ENCODE measurements at regions of chr10 and their contacts with region 1.

Region 1: DNA sequence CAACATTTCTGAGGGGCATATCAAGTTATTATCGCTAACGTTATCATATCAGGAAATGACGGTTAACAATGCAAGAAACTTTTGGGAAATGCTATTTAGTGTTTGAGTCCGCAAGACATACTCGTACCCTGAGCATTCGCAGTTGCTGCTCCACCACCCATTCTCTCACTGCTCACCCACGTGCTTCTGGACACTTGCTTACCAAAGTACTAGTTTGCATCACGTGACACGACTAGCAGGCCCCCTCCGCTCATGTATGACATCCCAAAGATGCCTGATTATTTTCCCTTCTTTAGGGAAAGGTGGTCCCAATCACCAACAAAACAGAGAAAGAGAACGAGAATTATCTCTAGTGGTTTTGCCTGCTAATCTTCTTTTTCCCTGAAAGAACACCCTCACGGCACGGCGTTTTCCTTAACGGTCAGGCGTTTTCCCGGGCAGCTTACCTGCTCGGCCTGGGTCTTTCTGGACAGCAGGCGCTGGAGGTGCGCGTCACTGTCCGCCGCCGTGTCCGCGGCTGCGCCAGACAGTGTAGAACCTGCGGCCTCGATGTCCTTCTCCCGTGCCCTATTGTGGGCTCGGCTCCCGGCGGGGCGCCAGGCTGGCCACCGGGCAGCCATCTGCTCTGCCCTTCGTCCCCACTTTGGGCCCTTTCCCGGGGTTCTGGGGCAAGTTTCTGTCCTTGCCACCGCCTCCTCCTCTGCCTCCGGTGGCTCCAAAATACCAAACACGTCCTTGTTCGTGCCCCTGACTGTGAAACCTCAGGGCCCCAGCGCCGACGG is at the start of gene SUPV3L1:
- DNase-seq: peak; percentile 96
- ATAC-seq: peak; percentile 87
- H3K4me3 ChIP-seq: peak within 1 kb of the TSS; percentile 79 to 96 (median 94)
- H3K4me3 Mint-ChIP-seq: peak within 1 kb of the TSS; percentile 97
- H3K27ac ChIP-seq: peak within 1 kb of the TSS; percentile 91 to 99
- H3K27ac Mint-ChIP-seq: peak within 1 kb of the TSS; percentile 100
- H3K4me1 ChIP-seq: peaks cover 11 to 18% of the 10 kb centered on the region in 2 donors
- H3K4me1 Mint-ChIP-seq: peaks cover 41% of the 10 kb centered on the region
- H3K27me3 ChIP-seq: no peaks in the 10 kb centered on the region
- H3K27me3 Mint-ChIP-seq: no peaks in the 10 kb centered on the region
- CTCF ChIP-seq: no peak
- total RNA-seq, gene SUPV3L1: 37.1 and 40.4 TPM in 2 replicates

Region 2: DNA sequence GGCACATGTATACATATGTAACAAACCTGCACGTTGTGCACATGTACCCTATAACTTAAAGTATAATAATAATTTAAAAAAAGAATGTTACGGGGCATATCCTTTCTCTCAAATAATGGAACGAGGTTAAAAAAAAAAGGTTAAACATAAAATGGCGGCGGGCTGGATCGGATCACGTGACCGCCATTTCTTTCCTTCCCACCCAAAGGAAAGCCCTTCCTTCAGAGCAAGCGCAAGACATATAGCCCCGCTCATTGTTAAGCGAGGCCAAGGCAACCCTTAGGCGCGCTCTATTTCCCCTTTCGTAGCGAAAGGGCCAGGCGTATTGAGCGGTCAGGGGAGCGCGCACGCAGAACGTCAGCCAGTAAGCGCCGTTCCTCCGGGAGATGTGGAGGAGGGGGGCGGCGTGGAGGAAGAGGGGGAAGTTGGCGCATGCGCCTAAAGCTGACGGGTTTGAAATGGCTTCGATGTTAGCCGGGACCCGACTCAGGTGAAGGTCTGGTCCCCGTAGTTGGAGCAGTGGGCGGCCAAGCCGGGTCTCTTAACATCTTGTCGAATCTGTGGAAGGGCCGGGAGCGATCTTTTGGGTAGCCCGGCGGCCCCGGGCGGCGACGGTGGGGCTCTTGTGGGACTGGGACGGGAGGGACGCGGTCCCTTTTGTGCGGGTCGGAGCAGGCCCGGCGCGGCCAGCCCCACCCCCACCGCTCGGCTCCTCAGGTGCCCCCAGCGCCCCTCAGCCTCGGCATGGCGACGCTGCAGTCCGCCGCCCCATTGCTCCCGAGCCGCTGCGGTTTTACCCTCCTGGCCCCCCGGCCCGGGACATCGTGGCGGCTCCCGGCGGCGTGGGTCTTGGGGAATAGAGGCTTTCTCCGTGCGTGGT is 458.9 kb before region 1 on chr10 and contains the start of gene CCAR1:
- CTCF ChIA-PET with region 1: no interaction called
- POLR2A ChIA-PET with region 1: no interaction called
- intact Hi-C with region 1: loop called (anchors 10 kb)
- DNase-seq: peak; percentile 99
- ATAC-seq: peak; percentile 97
- H3K4me3 ChIP-seq: peak within 1 kb of the TSS; percentile 58 to 96 (median 93)
- H3K4me3 Mint-ChIP-seq: peak within 1 kb of the TSS; percentile 96
- H3K27ac ChIP-seq: peak within 1 kb of the TSS; percentile 81 to 95
- H3K27ac Mint-ChIP-seq: peak within 1 kb of the TSS; percentile 97
- H3K4me1 ChIP-seq: peaks cover 10 to 15% of the 10 kb centered on the region in 2 donors
- H3K4me1 Mint-ChIP-seq: peaks cover 17% of the 10 kb centered on the region
- H3K27me3 ChIP-seq: no peaks in the 10 kb centered on the region
- H3K27me3 Mint-ChIP-seq: no peaks in the 10 kb centered on the region
- CTCF ChIP-seq: no peak
- total RNA-seq, gene CCAR1: 98.9 and 101 TPM in 2 replicates

Region 3: DNA sequence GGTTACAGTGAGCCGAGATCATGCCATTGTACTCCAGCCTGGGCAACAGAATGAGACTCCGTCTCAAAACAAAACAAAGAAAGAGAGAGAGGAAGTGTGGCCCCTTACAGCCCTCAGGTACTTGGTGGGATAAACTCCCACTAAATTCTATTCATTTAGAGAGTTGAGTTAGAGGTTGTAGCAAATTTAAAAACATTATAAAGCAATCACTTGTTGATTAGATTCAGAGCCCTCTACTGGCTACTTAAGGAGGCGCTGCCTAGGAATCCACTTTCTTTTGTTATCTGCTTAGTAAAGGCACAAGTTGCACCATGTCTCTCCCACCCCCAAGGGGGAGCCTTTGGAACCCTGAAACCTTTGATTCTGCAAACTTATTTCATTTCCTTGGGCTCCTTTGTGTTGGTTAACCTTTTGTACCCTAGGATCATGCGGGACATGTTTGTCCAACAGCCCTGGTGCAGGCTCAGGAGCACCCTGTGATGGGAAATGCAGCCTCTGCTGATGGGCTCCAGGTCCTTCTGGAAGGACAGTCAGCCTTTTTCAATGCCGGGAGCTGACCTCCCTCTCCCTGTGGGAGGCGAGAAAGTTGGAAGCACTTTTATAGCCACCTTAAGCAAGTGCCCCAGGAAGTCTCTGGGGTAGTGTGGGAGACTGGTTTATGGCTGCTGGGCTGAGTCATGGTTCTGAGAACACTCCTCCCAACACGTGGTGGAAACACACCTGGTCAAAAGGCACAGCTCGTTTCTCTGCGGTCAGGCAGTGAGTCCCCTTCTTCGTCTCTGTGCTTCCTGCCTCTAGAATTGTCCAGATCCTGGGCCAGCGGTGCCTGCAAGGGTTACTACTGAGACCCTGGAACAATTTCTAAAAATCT is 42.5 kb after region 1 on chr10:
- CTCF ChIA-PET with region 1: no interaction called
- POLR2A ChIA-PET with region 1: no interaction called
- intact Hi-C with region 1: loop called (anchors 2 kb)
- DNase-seq: peak; percentile 60
- ATAC-seq: peak; percentile 85
- H3K4me3 ChIP-seq: peak overlapping the region in 1 of 5 experiments; percentile 15
- H3K4me3 Mint-ChIP-seq: peak overlapping the region; percentile 53
- H3K27ac ChIP-seq: no peak overlapping the region
- H3K27ac Mint-ChIP-seq: peak overlapping the region; percentile 75
- H3K4me1 ChIP-seq: peaks cover 20 to 29% of the 10 kb centered on the region in 2 donors
- H3K4me1 Mint-ChIP-seq: peaks cover 26% of the 10 kb centered on the region
- H3K27me3 ChIP-seq: no peaks in the 10 kb centered on the region
- H3K27me3 Mint-ChIP-seq: no peaks in the 10 kb centered on the region
- CTCF ChIP-seq: peak; percentile 79

Region 4: GRCh38 chr10:69242852-69243212 is 62.9 kb after region 1 on chr10:
- CTCF ChIA-PET with region 1: no interaction called
- POLR2A ChIA-PET with region 1: no interaction called
- intact Hi-C with region 1: no loop called
- DNase-seq: no peak
- ATAC-seq: no peak
- H3K4me3 ChIP-seq: no peak overlapping the region
- H3K4me3 Mint-ChIP-seq: no peak overlapping the region
- H3K27ac ChIP-seq: no peak overlapping the region
- H3K27ac Mint-ChIP-seq: no peak overlapping the region
- H3K4me1 ChIP-seq: peaks cover 0 to under 1% of the 10 kb centered on the region in 2 donors
- H3K4me1 Mint-ChIP-seq: no peaks in the 10 kb centered on the region
- H3K27me3 ChIP-seq: no peaks in the 10 kb centered on the region
- H3K27me3 Mint-ChIP-seq: no peaks in the 10 kb centered on the region
- CTCF ChIP-seq: no peak

Region 5: DNA sequence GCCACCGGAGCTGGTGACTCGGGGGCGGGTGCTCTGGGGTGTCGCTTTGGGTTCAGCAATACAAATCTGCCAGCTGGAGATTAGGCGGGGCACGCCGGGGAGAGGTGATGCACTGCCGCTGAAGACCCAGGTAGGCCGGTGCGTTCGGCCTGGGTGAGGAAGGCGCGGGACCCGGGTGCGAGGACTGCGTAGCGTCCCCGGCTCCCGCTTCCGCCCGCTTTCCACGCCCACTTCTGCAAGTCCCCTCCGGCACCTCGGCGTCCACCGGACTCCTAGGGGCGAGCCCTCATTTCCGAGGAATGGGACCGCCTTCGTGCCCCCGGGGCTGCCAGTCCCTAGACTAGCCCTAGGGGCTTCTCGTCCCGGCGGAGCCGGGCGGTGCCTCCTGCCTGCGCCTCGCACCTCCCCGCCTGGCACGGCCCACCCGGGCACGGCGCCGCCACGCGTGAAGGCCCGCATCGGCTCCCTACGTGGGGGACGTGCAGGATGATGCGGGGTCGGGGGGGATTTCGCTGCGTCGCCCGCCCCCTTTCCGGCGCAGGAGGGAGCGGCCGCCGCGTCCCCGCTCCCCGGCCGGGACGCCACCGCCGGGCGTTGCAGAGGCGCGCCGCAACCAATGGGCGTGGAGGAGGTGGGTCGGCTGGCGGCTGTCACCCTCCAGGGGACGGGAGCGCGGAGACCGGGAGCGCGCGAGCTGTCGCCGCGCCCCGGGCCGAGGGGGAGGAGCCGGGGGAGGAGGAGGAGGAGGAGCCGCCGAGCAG is 138.4 kb after region 1 on chr10:
- CTCF ChIA-PET with region 1: no interaction called
- POLR2A ChIA-PET with region 1: no interaction called
- intact Hi-C with region 1: loop called (anchors 1 kb)
- DNase-seq: peak; percentile 93
- ATAC-seq: peak; percentile 93
- H3K4me3 ChIP-seq: peak overlapping the region; percentile 3 to 98 (median 94)
- H3K4me3 Mint-ChIP-seq: peak overlapping the region; percentile 96
- H3K27ac ChIP-seq: peak overlapping the region; percentile 82 to 85
- H3K27ac Mint-ChIP-seq: peak overlapping the region; percentile 91
- H3K4me1 ChIP-seq: peaks cover 22 to 31% of the 10 kb centered on the region in 2 donors
- H3K4me1 Mint-ChIP-seq: peaks cover 37% of the 10 kb centered on the region
- H3K27me3 ChIP-seq: no peaks in the 10 kb centered on the region
- H3K27me3 Mint-ChIP-seq: no peaks in the 10 kb centered on the region
- CTCF ChIP-seq: no peak

Measured in B cell (primary cell).